Heart right ventricle (tissue), 16 donors: ENCODE measurements at regions of chr19 and their contacts with region 1.

Region 1: DNA sequence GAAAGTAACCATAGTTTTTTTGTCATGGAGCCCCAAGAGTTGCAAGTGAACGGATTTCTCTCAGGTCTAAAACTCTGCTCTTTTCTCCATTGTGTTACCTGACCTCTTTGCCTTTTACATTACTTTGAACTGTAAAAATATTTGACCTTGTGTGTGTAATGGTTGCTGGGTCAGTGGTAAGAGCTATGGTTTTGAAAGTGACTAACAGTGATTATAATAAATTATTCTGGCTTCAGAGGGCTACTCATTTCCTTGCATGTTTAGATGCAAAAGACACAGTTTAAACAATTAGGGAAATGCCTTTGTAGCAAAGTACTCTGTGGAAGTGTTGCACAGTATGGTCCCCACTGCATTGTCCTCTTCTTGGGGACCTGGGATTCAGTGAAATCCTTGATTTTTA is 29.3 kb upstream of the PSG8 start:
- DNase-seq: no peak
- ATAC-seq: no peak
- H3K4me3 ChIP-seq: no peak overlapping the region
- H3K27ac ChIP-seq: no peak overlapping the region
- H3K4me1 ChIP-seq: no peaks in the 10 kb centered on the region
- H3K27me3 ChIP-seq: peaks cover 0 to 4% (median 0%) of the 10 kb centered on the region in 7 donors
- CTCF ChIP-seq: no peak

Region 2: DNA sequence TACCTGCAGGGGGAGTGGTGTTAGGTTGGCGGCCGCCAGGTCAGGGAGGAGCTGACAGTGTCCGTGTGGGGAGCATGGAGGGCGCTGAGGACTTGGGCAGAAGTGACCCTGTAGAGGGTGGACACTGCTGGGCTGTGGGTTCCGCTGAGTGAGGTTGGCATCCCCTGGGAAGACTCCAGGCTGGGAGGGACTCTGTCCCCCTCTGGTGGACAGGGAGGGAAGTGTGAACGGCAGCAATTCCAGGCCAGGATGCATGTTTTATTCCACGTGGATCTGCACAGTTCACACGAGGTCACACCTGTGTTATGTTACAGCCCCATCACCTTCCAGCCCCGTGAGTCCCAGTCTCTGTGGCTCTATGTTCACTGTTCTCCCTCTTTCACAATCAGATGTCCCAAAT is 86.5 kb after region 1 on chr19:
- intact Hi-C with region 1: loop called in 2 of 10 experiments (anchors 2 to 10 kb)
- DNase-seq: no peak
- ATAC-seq: no peak
- H3K4me3 ChIP-seq: no peak overlapping the region
- H3K27ac ChIP-seq: no peak overlapping the region
- H3K4me1 ChIP-seq: no peaks in the 10 kb centered on the region
- H3K27me3 ChIP-seq: peaks cover 0 to 19% (median 8%) of the 10 kb centered on the region in 7 donors
- CTCF ChIP-seq: peak in 5 of 9 donors; percentile 6 to 42 (median 25)